PC-9 (cell line): ENCODE measurements at regions of chr5 and their contacts with region 1.

Region 1: DNA sequence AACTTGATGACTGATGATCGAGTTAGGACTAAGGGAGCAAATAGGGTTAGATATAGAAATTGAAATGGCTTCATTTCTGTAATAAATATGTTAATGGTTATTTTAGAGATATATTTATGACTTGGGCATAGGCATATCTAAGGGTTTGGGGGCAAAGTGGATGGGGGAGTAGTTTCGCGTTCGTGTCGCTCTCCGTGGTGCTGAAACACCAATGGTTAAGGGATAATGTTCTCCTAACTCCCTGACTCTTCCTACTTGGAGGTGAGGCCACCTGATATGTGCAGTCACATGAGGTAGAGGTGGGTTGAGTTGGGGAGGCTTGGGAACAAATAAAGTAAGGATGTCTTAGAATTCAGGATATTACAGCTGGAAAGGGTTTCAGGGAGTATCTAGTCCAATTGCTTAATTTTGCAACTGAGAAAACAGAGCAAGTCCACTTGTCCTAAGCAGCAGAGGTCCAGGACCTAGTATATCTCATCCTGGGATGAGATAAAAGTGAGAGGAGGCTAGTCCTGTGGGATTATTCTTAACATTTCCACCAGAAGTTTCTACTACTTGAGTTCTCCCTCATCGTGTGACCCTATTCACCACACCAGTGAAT is 44.0 kb upstream of the MAP1B start:
- DNase-seq: no peak
- H3K4me3 ChIP-seq: no peak overlapping the region
- H3K27ac ChIP-seq: no peak overlapping the region
- H3K4me1 ChIP-seq: peaks cover 36% of the 10 kb centered on the region
- H3K27me3 ChIP-seq: no peaks in the 10 kb centered on the region
- CTCF ChIP-seq: no peak

Region 2: DNA sequence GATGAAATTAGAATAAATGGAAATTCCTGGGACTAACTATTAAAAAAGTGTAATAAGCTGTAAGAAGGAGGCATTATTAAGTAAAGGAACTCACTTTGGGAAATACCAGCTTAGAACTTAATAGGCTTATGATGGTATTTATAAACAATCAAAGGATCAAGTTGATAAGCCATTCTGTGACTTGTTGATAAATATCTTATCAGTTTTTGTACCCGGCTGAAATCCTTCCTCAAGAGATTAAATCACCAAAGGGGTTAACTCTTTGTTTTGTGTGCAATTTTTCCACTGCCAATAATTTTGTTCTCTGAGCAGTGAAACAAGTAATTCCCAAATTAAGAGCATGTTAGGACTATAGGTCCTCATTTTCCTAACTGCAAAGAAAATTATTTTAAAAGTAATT is 678.6 kb before region 1 on chr5:
- CTCF ChIA-PET with region 1: no interaction called
- POLR2A ChIA-PET with region 1: no interaction called
- intact Hi-C with region 1: no loop called
- DNase-seq: no peak
- H3K4me3 ChIP-seq: no peak overlapping the region
- H3K27ac ChIP-seq: no peak overlapping the region
- H3K4me1 ChIP-seq: no peaks in the 10 kb centered on the region
- H3K27me3 ChIP-seq: no peaks in the 10 kb centered on the region
- CTCF ChIP-seq: no peak

Region 3: GRCh38 chr5:71922584-71923106 is 140.7 kb before region 1 on chr5:
- CTCF ChIA-PET with region 1: no interaction called
- POLR2A ChIA-PET with region 1: interaction called, 20 read pairs
- intact Hi-C with region 1: no loop called
- DNase-seq: peak; percentile 66 to 92
- H3K4me3 ChIP-seq: no peak overlapping the region
- H3K27ac ChIP-seq: peak overlapping the region; percentile 94
- H3K4me1 ChIP-seq: peaks cover 36% of the 10 kb centered on the region
- H3K27me3 ChIP-seq: no peaks in the 10 kb centered on the region
- CTCF ChIP-seq: no peak

Region 4: GRCh38 chr5:71938895-71939294 is 124.4 kb before region 1 on chr5:
- CTCF ChIA-PET with region 1: no interaction called
- POLR2A ChIA-PET with region 1: interaction called, 4 read pairs
- intact Hi-C with region 1: loop called (anchors 1 kb)
- DNase-seq: peak; percentile 87 to 88
- H3K4me3 ChIP-seq: no peak overlapping the region
- H3K27ac ChIP-seq: peak overlapping the region; percentile 50
- H3K4me1 ChIP-seq: peaks cover 21% of the 10 kb centered on the region; the same call in 1 of the 2 replicates
- H3K27me3 ChIP-seq: no peaks in the 10 kb centered on the region
- CTCF ChIP-seq: no peak

Region 5: GRCh38 chr5:72084876-72085275 is 21.6 kb after region 1 on chr5:
- CTCF ChIA-PET with region 1: no interaction called
- POLR2A ChIA-PET with region 1: no interaction called
- intact Hi-C with region 1: no loop called
- DNase-seq: no peak
- H3K4me3 ChIP-seq: no peak overlapping the region
- H3K27ac ChIP-seq: no peak overlapping the region
- H3K4me1 ChIP-seq: no peaks in the 10 kb centered on the region
- H3K27me3 ChIP-seq: no peaks in the 10 kb centered on the region
- CTCF ChIP-seq: no peak

Region 6: DNA sequence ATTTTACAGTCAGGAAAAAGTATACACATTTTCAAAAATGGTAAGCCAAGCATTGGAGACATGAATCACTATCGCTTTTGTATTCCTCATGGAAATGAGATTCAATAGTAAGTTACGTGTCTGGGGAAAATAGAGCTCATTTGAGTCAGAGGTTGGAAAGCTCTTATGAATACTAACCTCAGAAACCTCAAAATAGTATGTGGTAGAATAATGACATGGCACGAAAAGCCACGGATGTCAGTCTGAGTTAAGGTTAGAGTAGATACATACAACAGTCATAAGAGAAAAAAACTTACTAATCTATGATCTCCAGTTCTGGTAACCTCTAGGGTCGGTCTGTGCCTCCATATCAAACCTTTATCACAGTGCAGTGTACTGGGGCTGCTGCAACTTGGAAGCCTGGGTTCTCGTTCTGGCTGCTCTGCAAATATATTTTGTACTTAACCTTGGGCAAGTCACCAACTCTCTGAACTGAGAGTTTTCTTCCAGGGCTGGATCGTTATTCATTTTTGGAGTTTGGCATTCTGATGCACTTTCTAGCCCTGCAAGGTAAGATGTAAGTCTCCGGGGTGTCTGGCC is 75.7 kb after region 1 on chr5:
- CTCF ChIA-PET with region 1: no interaction called
- POLR2A ChIA-PET with region 1: no interaction called
- intact Hi-C with region 1: loop called (anchors 10 kb)
- DNase-seq: no peak
- H3K4me3 ChIP-seq: no peak overlapping the region
- H3K27ac ChIP-seq: no peak overlapping the region
- H3K4me1 ChIP-seq: peaks cover 27% of the 10 kb centered on the region
- H3K27me3 ChIP-seq: no peaks in the 10 kb centered on the region
- CTCF ChIP-seq: no peak

Region 7: DNA sequence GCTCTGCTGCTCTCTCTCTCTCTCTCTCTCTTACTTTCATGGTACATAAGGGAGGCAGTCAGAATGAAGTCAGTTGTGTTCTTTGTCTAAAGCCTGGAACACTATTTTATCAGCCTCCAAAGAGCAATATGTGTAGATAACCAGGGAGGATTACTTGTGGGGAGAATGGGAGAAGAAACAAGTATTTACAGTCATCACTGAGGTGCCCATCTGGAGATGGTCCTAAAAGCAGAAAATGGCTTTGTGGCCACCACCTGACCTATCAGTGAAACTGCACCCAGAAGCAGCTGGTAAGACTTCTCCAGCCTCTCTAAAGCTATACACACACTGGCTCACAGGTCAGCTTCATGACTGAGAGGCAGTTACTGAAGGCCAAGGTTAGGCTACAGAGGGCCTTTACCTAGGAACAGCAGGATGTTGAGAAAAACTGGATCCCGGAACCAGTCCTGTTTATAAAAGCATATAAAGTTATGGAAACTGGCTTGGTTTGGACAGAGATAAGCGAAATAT is 181.6 kb after region 1 on chr5:
- CTCF ChIA-PET with region 1: no interaction called
- POLR2A ChIA-PET with region 1: interaction called, 11 read pairs
- intact Hi-C with region 1: no loop called
- DNase-seq: no peak
- H3K4me3 ChIP-seq: no peak overlapping the region
- H3K27ac ChIP-seq: no peak overlapping the region
- H3K4me1 ChIP-seq: peaks cover 27% of the 10 kb centered on the region
- H3K27me3 ChIP-seq: no peaks in the 10 kb centered on the region
- CTCF ChIP-seq: peak; percentile 50

Region 8: GRCh38 chr5:72255237-72255636 is 191.9 kb after region 1 on chr5:
- CTCF ChIA-PET with region 1: no interaction called
- POLR2A ChIA-PET with region 1: no interaction called
- intact Hi-C with region 1: no loop called
- DNase-seq: no peak
- H3K4me3 ChIP-seq: no peak overlapping the region
- H3K27ac ChIP-seq: no peak overlapping the region
- H3K4me1 ChIP-seq: 0 out of 2 replicates have a peak, but pooled peaks cover 12% of the 10 kb centered on the region
- H3K27me3 ChIP-seq: no peaks in the 10 kb centered on the region
- CTCF ChIP-seq: no peak

Region 9: DNA sequence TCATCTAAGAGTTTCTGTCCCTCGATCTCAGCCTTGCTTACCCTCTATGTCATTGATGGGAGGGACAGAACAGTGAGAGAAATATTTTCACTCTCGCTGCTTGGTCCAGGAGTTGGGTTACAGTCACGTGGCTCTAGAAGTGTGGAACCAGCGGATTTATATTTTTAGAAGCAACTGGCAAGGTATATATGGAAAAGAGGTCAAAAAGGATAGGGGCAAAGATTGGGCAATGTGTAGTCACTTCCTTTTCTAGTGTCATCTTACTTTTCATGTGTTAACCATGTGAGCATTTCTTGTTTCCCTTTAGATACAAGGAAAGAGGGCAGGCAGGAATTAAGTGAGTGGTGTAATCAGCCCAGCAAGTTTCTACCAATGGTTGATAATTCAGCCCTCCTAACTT is 555.4 kb after region 1 on chr5:
- CTCF ChIA-PET with region 1: no interaction called
- POLR2A ChIA-PET with region 1: no interaction called
- intact Hi-C with region 1: no loop called
- DNase-seq: no peak
- H3K4me3 ChIP-seq: no peak overlapping the region
- H3K27ac ChIP-seq: no peak overlapping the region
- H3K4me1 ChIP-seq: no peaks in the 10 kb centered on the region
- H3K27me3 ChIP-seq: no peaks in the 10 kb centered on the region
- CTCF ChIP-seq: no peak

Region 10: DNA sequence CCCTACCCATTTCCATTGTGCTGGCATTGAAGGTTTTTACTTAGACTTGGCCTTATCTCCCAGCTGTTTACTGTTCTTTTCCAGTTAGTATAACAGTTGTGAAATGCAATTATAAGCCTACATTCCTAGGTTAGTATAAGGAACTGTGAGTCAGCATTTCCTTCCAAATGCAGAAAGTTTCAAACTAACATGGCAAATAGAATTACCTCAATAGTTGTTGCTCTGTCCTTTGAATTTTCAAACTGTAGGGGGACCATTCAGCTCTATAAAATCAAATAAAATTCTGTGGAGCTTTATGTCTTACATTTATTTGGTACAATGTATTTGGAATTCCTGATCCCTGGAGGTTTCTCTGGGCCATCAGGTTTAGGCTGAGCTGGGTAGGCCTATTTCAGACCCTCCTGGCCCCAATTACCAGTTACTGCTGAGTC is 1609.9 kb after region 1 on chr5:
- CTCF ChIA-PET with region 1: no interaction called
- POLR2A ChIA-PET with region 1: interaction called, 12 read pairs
- intact Hi-C with region 1: no loop called
- DNase-seq: peak in 1 of 2 experiments; percentile 85
- H3K4me3 ChIP-seq: 0 out of 2 replicates have a peak overlapping the region, but pooled peaks have one; percentile 1
- H3K27ac ChIP-seq: peak overlapping the region; percentile 91
- H3K4me1 ChIP-seq: peaks cover 39% of the 10 kb centered on the region
- H3K27me3 ChIP-seq: no peaks in the 10 kb centered on the region
- CTCF ChIP-seq: no peak